Right cardiac atrium (tissue), 5 donors: ENCODE measurements at regions of chr18 and their contacts with region 1.

Region 1: DNA sequence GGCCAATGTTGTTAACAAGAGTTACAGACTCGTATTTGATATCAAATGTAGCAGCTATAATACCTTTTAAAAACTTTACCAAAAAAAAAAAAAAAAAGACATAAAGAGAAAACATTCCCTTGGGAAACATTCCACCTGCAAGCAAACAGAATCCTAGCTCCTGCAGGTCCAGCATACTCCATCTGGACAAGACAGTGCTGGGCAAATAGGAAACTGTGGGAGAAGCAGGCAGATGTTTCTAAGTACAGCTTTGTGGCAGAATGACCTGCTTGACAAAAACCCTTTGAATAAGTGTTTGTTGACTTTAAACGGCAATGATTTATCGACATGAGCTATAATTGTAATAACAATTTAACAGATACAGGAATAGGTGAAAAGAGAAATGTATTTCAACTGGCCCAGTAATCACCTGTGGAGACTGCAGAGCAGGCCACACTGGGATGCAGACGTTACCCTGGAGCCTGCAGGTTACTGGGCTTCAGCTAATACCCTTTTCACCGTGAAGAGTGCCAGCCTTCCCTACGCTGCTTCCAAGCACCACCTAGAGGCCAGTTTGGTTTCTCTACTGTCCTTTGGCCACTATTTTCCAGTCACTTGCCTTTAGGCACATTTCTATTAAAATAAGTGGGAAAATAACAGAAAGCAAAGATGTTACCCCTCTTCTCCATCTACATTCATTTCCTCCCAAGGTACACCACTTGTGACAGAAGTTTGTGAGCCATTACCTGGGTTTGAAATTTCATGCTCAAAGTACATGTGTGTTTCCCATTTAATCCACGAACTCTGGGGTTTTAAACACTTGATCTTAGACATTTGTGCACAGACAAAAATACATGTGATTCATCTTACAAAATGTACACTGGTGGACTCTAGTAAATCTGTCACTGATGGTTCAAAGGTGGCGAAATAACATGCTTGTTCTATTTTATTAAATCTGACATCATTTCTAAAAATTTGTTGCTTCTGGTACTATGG is 96.9 kb upstream of the ZNF397 start:
- DNase-seq: peak in 1 of 3 donors; percentile 69
- ATAC-seq: peak; percentile 93
- H3K4me3 ChIP-seq: no peak overlapping the region
- H3K27ac ChIP-seq: no peak overlapping the region
- H3K4me1 ChIP-seq: no peaks in the 10 kb centered on the region
- H3K27me3 ChIP-seq: no peaks in the 10 kb centered on the region

Region 2: DNA sequence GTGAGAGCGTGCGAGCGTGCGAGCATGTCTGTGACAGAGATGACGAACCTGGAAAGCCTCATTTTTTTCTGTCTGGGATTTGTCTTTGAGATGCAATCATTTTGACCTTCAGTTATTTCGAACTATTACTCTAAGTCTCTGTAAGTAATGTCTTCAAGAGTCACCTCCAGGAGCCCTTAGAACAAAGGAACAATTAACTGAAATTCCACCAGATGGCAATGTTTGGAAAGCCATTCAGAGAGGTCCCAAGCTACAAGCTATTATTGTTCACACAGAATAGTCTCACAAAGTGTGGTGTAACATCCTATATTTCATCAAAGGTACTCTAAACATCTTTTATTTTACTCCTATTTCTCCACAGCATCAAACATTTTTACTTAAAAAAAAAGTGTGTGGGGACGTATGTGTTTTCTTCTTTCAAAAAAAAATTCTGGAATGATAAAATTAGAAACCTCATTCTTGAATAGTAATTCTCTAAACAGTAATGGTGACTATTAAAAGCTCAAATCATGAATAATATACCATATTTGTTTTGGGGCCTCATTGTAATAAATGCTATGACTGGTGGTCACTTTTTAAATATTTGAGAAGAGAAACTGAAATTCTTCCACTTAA is 137.8 kb before region 1 on chr18:
- intact Hi-C with region 1: loop called (anchors 5 to 10 kb)
- DNase-seq: no peak
- ATAC-seq: peak; percentile 87 to 92
- H3K4me3 ChIP-seq: no peak overlapping the region
- H3K27ac ChIP-seq: no peak overlapping the region
- H3K4me1 ChIP-seq: no peaks in the 10 kb centered on the region
- H3K27me3 ChIP-seq: no peaks in the 10 kb centered on the region

Region 3: DNA sequence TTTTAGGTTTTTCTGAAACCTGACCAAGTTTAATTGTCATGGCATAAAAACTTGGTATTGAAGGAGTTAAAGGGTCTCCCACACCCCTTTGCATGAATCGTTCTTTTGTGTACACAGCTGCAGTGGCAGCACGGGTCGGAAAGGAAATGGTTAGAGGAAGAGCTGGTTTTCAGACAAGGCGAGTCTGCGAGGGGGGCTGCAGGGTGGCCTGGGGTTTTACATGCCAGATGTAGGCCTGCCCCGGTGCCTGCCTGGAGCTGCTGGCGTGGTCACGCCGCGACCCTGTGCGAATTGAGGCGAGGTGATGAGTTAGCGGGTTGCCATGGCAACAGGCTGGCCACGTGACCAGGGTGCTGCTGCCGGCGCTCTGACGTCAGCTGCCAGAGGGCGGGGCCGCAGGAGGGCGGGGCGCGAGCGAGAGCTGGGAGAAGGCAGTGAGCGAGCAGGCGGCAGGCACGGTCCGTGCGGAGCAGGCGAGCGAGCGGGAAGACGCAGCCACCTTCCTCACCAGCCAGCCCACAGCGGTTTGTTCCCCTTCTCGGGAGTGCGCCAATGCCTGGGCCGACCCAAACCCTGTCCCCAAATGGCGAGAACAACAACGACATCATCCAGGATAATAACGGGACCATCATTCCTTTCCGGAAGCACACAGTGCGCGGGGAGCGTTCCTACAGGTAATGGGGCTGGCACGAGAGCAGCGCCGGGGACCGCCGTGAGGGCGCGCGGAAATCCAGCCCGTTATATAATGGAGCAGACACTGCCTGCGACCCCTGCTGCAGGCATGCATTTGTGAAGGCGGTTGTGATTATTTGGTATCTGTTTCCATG is 102.7 kb before region 1 on chr18 and contains the start of gene MAPRE2:
- intact Hi-C with region 1: loop called in 3 of 4 experiments (anchors 5 to 10 kb)
- DNase-seq: peak; percentile 100
- ATAC-seq: peak; percentile 98
- H3K4me3 ChIP-seq: peak within 1 kb of the TSS; percentile 74
- H3K27ac ChIP-seq: peak within 1 kb of the TSS; percentile 81
- H3K4me1 ChIP-seq: peaks cover 7% of the 10 kb centered on the region
- H3K27me3 ChIP-seq: no peaks in the 10 kb centered on the region
- total RNA-seq, gene MAPRE2: 86.2 to 108 (median 92.0) TPM

Region 4: GRCh38 chr18:35635170-35635569 is 491.3 kb after region 1 on chr18:
- intact Hi-C with region 1: no loop called
- DNase-seq: no peak
- ATAC-seq: no peak
- H3K4me3 ChIP-seq: no peak overlapping the region
- H3K27ac ChIP-seq: no peak overlapping the region
- H3K4me1 ChIP-seq: peaks cover 5% of the 10 kb centered on the region
- H3K27me3 ChIP-seq: no peaks in the 10 kb centered on the region

Region 5: DNA sequence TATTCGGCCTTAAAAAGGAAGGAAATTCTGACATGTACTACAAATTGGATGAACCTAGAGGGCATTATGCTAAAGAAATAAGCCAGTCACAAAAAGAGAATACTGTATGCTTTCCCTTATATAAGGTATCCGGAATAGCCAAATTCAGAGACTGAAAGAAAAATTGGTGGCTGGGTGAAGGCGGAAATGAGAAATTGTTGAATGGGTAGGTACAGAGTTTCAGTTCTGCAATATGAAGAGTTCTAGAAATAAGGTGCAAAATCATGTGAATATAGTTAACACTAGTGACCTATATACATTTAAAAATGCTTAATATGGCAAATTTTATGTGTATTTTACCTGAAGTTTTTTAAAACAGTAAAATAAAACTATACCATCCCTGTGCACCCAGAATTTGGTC is 871.7 kb after region 1 on chr18:
- intact Hi-C with region 1: no loop called
- DNase-seq: no peak
- ATAC-seq: no peak
- H3K4me3 ChIP-seq: no peak overlapping the region
- H3K27ac ChIP-seq: no peak overlapping the region
- H3K4me1 ChIP-seq: no peaks in the 10 kb centered on the region
- H3K27me3 ChIP-seq: no peaks in the 10 kb centered on the region